HEK293 (cell line): ENCODE measurements at regions of chr7 and their contacts with region 1.

Region 1: GRCh38 chr7:92695308-92696261 is 105.4 kb upstream of the FAM133B start:
- H3K4me3 ChIP-seq: peak overlapping the region; percentile 40
- H3K27ac ChIP-seq: peak overlapping the region; percentile 43
- H3K4me1 ChIP-seq: peaks cover 3% of the 10 kb centered on the region; the same call in 1 of the 2 replicates
- CTCF ChIP-seq: no peak

Region 2: GRCh38 chr7:92255308-92255707 is 440.3 kb before region 1 on chr7:
- CTCF ChIA-PET with region 1: no interaction called
- POLR2A ChIA-PET with region 1: no interaction called
- H3K4me3 ChIP-seq: no peak overlapping the region
- H3K27ac ChIP-seq: no peak overlapping the region
- H3K4me1 ChIP-seq: no peaks in the 10 kb centered on the region
- CTCF ChIP-seq: no peak

Region 3: DNA sequence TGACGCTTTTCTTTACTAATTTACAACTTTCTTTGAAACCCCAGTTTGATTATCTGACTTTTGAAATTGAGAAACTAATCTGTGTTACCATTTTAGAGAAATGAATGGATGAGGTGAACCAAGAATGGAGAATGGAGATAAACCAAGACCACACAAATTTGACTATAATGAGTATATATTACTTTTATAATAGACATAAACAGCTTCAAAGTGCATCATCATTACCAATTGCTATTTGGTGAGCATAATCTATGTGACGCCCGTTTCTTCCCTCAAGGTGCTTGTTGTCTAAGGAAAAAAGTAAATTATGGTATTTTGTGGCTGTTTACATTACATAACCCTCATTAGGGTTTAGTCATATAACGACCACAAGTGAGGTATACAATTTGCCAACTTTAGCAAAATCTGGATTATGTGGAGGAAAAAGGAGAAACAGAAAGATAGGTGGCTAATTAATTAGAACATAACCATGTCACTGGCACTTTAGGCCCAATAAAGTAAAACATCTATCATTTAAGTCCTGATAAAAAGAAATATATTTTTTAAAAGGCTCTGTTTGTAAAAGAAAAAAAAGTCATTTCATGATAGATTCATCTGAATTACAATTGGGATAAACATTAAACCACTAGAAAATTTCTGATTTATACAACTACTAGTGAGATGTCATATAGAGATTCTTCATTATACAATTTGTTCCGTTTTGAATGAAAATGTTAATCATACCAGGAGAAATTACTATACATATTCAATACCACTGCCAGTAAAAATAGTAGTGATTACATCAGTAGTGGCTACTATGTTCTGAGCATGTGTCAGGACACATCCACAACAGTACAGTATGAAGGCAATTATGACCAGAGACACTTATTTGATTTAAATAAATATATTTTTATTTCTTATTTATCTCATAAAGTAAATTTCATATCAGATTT is 12.8 kb after region 1 on chr7:
- CTCF ChIA-PET with region 1: no interaction called
- POLR2A ChIA-PET with region 1: no interaction called
- H3K4me3 ChIP-seq: no peak overlapping the region
- H3K27ac ChIP-seq: no peak overlapping the region
- H3K4me1 ChIP-seq: no peaks in the 10 kb centered on the region
- CTCF ChIP-seq: no peak

Region 4: DNA sequence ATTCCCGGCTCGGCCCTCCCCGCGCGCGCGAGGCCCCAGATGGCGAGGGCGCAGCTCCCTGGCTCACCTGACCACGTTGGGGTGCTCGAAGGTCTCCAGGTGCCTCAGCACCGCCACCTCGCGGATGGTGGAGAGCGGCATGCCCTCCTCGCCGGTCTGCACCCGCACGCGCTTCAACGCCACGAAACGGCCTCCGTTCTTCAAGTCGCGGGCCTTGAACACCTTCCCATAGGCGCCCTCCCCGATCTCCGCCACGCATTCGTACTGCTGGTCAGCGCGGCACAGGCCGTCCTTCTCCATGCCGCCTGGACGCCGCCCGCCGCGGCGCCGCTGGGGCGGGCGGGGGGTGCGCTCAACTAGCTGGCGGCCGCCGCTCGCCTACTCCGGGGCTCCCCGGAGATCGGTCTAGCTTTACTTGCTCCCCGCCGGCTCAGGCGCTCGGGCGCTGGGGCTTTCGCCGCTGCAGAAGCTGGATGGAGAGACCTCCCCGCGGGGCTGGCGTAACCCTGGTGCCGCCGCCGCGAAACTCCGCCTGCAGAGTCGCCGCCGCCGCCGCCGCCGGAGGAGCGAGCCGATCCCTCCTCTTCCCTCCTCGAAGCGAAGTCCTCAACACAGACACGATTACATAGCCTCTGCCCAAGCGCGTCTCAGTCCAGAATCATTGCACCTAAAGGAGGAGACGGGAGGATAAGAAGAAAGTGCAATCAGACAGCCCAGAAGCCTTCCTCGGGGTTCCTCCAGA is 137.6 kb after region 1 on chr7:
- CTCF ChIA-PET with region 1: interaction called, 11 read pairs
- POLR2A ChIA-PET with region 1: interaction called, 6 read pairs
- H3K4me3 ChIP-seq: peak overlapping the region; percentile 80
- H3K27ac ChIP-seq: peak overlapping the region; percentile 96
- H3K4me1 ChIP-seq: 0 out of 2 replicates have a peak, but pooled peaks cover 7% of the 10 kb centered on the region
- CTCF ChIP-seq: peak; percentile 95